ENCODE measurements at regions of chr15 and their contacts with region 1.

Region 1: GRCh38 chr15:36883713-36884517 is 216.4 kb downstream of the MEIS2 start:
- DNase-seq: peak; percentile 55
- ATAC-seq: no peak
- H3K4me3 ChIP-seq: no peak overlapping the region
- H3K4me3 Mint-ChIP-seq: no peak overlapping the region
- H3K27ac ChIP-seq: no peak overlapping the region
- H3K27ac Mint-ChIP-seq: no peak overlapping the region
- H3K4me1 ChIP-seq: peaks cover 5 to 12% of the 10 kb centered on the region in 2 donors
- H3K4me1 Mint-ChIP-seq: peaks cover 12% of the 10 kb centered on the region
- H3K27me3 ChIP-seq: peaks cover 0 to 77% (median 66%) of the 10 kb centered on the region in 4 experiments
- H3K27me3 Mint-ChIP-seq: peaks cover 88% of the 10 kb centered on the region
- CTCF ChIP-seq: peak; percentile 52

Region 2: DNA sequence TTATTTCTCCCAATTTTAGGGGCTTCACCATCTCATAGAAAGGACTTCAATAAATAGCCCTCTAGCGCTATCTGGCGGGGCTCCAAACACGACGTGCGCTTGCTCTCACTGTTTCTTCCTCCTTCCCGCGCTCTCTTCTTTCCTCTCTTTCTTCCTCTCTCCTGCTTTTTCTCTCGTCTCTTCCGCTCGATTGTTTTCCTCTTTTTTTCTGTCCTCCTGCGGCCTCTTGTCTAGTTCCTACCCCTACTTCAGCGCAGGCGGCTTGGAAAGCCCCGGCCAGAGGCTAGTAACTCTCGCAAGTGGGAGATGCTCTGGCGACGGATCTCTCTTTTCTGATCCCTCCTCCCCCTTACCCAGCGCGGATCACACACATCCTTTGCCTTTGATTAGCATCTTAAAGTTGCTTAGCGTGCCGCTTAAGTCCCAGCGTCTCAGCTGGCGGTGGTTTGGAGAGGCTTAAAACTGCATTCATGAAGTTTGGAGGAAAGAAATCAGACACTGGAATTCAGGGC is 222.6 kb after region 1 on chr15:
- CTCF ChIA-PET with region 1: interaction called, 3 read pairs
- POLR2A ChIA-PET with region 1: no interaction called
- intact Hi-C with region 1: loop called (anchors 5 kb)
- DNase-seq: peak; percentile 15
- ATAC-seq: no peak
- H3K4me3 ChIP-seq: no peak overlapping the region
- H3K4me3 Mint-ChIP-seq: no peak overlapping the region
- H3K27ac ChIP-seq: no peak overlapping the region
- H3K27ac Mint-ChIP-seq: no peak overlapping the region
- H3K4me1 ChIP-seq: peaks cover 17 to 33% of the 10 kb centered on the region in 2 donors
- H3K4me1 Mint-ChIP-seq: peaks cover 27% of the 10 kb centered on the region
- H3K27me3 ChIP-seq: peaks cover 0 to 81% (median 74%) of the 10 kb centered on the region in 4 experiments
- H3K27me3 Mint-ChIP-seq: peaks cover 90% of the 10 kb centered on the region
- CTCF ChIP-seq: peak; percentile 25

Region 3: DNA sequence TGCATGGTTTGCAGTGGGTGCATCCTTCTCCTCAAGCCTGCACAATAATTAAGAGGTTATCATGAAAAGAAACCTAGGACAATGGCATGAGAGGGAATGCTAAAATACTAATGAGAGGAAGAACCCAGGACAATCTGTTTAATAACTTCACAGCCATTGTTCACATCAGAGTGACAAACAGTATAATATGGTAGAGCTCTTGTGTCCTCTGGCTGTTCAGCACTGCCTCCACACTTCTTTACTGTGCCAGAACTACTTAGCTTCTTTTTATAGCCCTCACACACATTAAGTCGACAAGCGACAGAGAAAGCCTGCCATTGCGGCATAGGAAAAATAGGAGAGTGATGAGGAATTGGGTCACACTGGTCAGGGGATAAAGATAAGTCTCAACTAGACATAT is 281.5 kb after region 1 on chr15:
- CTCF ChIA-PET with region 1: no interaction called
- POLR2A ChIA-PET with region 1: no interaction called
- intact Hi-C with region 1: no loop called
- DNase-seq: no peak
- ATAC-seq: no peak
- H3K4me3 ChIP-seq: no peak overlapping the region
- H3K4me3 Mint-ChIP-seq: no peak overlapping the region
- H3K27ac ChIP-seq: no peak overlapping the region
- H3K27ac Mint-ChIP-seq: no peak overlapping the region
- H3K4me1 ChIP-seq: no peaks in the 10 kb centered on the region
- H3K4me1 Mint-ChIP-seq: no peaks in the 10 kb centered on the region
- H3K27me3 ChIP-seq: no peaks in the 10 kb centered on the region
- H3K27me3 Mint-ChIP-seq: no peaks in the 10 kb centered on the region
- CTCF ChIP-seq: no peak

Measured in B cell (primary cell).